Tibial artery (tissue), 4 donors: ENCODE measurements at regions of chr7 and their contacts with region 1.

Region 1: GRCh38 chr7:87059525-87060287 is at the start of gene ELAPOR2:
- DNase-seq: peak; percentile 65 to 87
- H3K4me3 ChIP-seq: peak within 1 kb of the TSS; percentile 65 to 73
- H3K27ac ChIP-seq: peak within 1 kb of the TSS; percentile 66 to 67
- H3K4me1 ChIP-seq: peaks cover 0 to 12% (median 6%) of the 10 kb centered on the region in 4 donors
- H3K27me3 ChIP-seq: no peaks in the 10 kb centered on the region
- CTCF ChIP-seq: peak; percentile 40 to 43

Region 2: GRCh38 chr7:86949052-86949778 is 110.5 kb before region 1 on chr7:
- intact Hi-C with region 1: no loop called
- DNase-seq: no peak
- H3K4me3 ChIP-seq: no peak overlapping the region
- H3K27ac ChIP-seq: no peak overlapping the region
- H3K4me1 ChIP-seq: peaks cover 0 to 23% (median 3%) of the 10 kb centered on the region in 4 donors
- H3K27me3 ChIP-seq: no peaks in the 10 kb centered on the region
- CTCF ChIP-seq: no peak

Region 3: GRCh38 chr7:87152107-87152844 is 92.6 kb after region 1 on chr7 and contains the start of gene DMTF1:
- intact Hi-C with region 1: loop called (anchors 5 kb)
- DNase-seq: peak; percentile 95 to 98
- H3K4me3 ChIP-seq: peak within 1 kb of the TSS; percentile 85
- H3K27ac ChIP-seq: peak within 1 kb of the TSS; percentile 99
- H3K4me1 ChIP-seq: peaks cover 0 to 47% (median 25%) of the 10 kb centered on the region in 4 donors
- H3K27me3 ChIP-seq: no peaks in the 10 kb centered on the region
- CTCF ChIP-seq: peak in 1 of 2 experiments; percentile 3

Region 4: GRCh38 chr7:87231256-87231655 is 171.6 kb after region 1 on chr7:
- intact Hi-C with region 1: loop called (anchors 10 kb)
- DNase-seq: no peak
- H3K4me3 ChIP-seq: no peak overlapping the region
- H3K27ac ChIP-seq: no peak overlapping the region
- H3K4me1 ChIP-seq: peaks cover 0 to 16% (median 6%) of the 10 kb centered on the region in 4 donors
- H3K27me3 ChIP-seq: peaks cover 0 to 8% of the 10 kb centered on the region in 2 donors
- CTCF ChIP-seq: no peak